ENCODE measurements at regions of chr1 and their contacts with region 1.

Region 1: GRCh38 chr1:94169126-94169525 is 48.2 kb upstream of the ABCA4 start:
- DNase-seq: no peak
- H3K4me3 ChIP-seq: no peak overlapping the region
- H3K27ac ChIP-seq: no peak overlapping the region
- H3K4me1 ChIP-seq: no peaks in the 10 kb centered on the region
- H3K27me3 ChIP-seq: peaks cover 6% of the 10 kb centered on the region
- CTCF ChIP-seq: no peak

Region 2: DNA sequence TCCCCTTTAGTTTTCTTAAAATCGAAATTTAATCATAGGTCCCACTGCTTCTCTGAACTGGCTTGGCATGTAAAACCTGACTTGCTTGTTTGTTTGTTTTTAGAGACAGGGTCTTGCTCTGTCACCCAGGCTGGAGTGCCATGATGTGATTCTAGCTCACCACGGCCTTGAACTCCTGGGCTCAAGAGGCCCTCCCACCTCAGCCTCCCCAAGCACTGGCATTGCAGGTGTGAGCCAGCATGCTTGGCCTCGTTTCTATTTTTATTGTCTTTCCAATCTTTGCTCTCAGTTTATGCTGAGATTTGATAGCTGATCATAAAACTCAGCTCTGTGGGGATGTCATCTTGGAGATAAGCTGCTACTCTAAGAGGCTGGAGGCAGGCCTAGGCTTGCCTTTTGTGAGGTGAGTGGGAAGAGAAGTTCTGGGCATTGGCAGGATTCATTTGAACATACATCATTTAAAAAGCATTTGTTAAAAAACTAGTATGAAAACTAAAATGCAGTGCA is 208.4 kb before region 1 on chr1:
- CTCF ChIA-PET with region 1: no interaction called
- POLR2A ChIA-PET with region 1: no interaction called
- intact Hi-C with region 1: no loop called
- DNase-seq: no peak
- H3K4me3 ChIP-seq: no peak overlapping the region
- H3K27ac ChIP-seq: no peak overlapping the region
- H3K4me1 ChIP-seq: no peaks in the 10 kb centered on the region
- H3K27me3 ChIP-seq: no peaks in the 10 kb centered on the region
- CTCF ChIP-seq: no peak

Region 3: GRCh38 chr1:94013625-94013964 is 155.5 kb before region 1 on chr1:
- CTCF ChIA-PET with region 1: no interaction called
- POLR2A ChIA-PET with region 1: interaction called, 11 read pairs
- intact Hi-C with region 1: no loop called
- DNase-seq: no peak
- H3K4me3 ChIP-seq: no peak overlapping the region
- H3K27ac ChIP-seq: no peak overlapping the region
- H3K4me1 ChIP-seq: no peaks in the 10 kb centered on the region
- H3K27me3 ChIP-seq: no peaks in the 10 kb centered on the region
- CTCF ChIP-seq: no peak

Measured in A673 (cell line).